Caco-2 (cell line): ENCODE measurements at regions of chr6 and their contacts with region 1.

Region 1: GRCh38 chr6:17599885-17600526 is at the start of gene FAM8A1:
- DNase-seq: peak; percentile 96
- H3K4me3 ChIP-seq: peak within 1 kb of the TSS; percentile 90
- H3K4me3 Mint-ChIP-seq: peak within 1 kb of the TSS; percentile 75
- H3K27ac Mint-ChIP-seq: peak within 1 kb of the TSS; percentile 57
- H3K4me1 ChIP-seq: peaks cover 10% of the 10 kb centered on the region
- H3K4me1 Mint-ChIP-seq: peaks cover 10% of the 10 kb centered on the region
- H3K27me3 ChIP-seq: no peaks in the 10 kb centered on the region
- H3K27me3 Mint-ChIP-seq: no peaks in the 10 kb centered on the region
- CTCF ChIP-seq: peak; percentile 30 to 67
- total RNA-seq, gene FAM8A1: 18.9 and 20.9 TPM in 2 replicates

Region 2: DNA sequence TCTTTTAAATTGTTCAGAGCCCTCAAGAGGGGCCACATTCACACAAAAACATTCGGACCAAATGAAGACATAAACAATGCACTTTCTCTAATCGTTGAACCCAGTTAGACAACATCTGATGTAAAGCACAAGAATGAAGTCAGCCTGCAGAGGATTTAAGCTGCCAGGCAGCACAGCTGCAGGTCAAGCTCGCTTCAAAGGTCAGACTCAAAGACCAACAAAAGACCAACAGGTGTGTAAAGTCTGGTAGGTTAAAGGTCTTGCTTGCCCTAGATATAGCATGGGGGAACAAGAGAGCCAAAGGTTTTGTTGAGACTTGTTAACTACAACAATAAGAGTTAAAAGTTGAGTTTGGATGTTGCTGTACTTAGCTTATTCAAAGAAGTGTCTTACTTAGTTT is 1497.8 kb before region 1 on chr6:
- CTCF ChIA-PET with region 1: no interaction called
- POLR2A ChIA-PET with region 1: interaction called, 12 read pairs
- intact Hi-C with region 1: no loop called
- DNase-seq: peak; percentile 58 to 69
- H3K4me3 ChIP-seq: no peak overlapping the region
- H3K4me3 Mint-ChIP-seq: peak overlapping the region; percentile 40
- H3K27ac Mint-ChIP-seq: no peak overlapping the region
- H3K4me1 ChIP-seq: peaks cover 61% of the 10 kb centered on the region
- H3K4me1 Mint-ChIP-seq: peaks cover 35% of the 10 kb centered on the region
- H3K27me3 ChIP-seq: no peaks in the 10 kb centered on the region
- H3K27me3 Mint-ChIP-seq: no peaks in the 10 kb centered on the region
- CTCF ChIP-seq: no peak

Region 3: DNA sequence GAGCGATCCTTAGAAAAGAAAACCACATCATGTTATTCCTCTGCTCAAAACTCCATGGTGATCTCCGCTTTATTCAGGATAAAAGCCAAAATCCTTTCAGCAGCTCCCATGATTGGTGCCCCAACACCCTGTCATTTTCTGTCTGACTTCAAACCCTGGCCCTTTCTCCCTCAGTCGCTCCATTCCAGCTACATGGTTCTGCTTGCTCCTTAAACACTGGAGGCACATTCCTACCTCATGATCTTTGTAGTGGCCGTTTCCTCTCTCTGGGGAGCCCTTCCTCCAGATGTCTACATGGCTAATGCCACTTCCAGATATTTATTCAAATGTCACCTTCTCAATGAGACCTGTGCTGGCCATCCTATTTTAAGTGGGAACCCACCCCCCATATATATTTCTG is 105.8 kb before region 1 on chr6:
- CTCF ChIA-PET with region 1: no interaction called
- POLR2A ChIA-PET with region 1: interaction called, 11 read pairs
- intact Hi-C with region 1: no loop called
- DNase-seq: no peak
- H3K4me3 ChIP-seq: no peak overlapping the region
- H3K4me3 Mint-ChIP-seq: no peak overlapping the region
- H3K27ac Mint-ChIP-seq: no peak overlapping the region
- H3K4me1 ChIP-seq: no peaks in the 10 kb centered on the region
- H3K4me1 Mint-ChIP-seq: no peaks in the 10 kb centered on the region
- H3K27me3 ChIP-seq: no peaks in the 10 kb centered on the region
- H3K27me3 Mint-ChIP-seq: no peaks in the 10 kb centered on the region
- CTCF ChIP-seq: no peak

Region 4: GRCh38 chr6:17803409-17803808 is 203.4 kb after region 1 on chr6:
- CTCF ChIA-PET with region 1: no interaction called
- POLR2A ChIA-PET with region 1: no interaction called
- intact Hi-C with region 1: loop called (anchors 5 kb)
- DNase-seq: no peak
- H3K4me3 ChIP-seq: no peak overlapping the region
- H3K4me3 Mint-ChIP-seq: no peak overlapping the region
- H3K27ac Mint-ChIP-seq: no peak overlapping the region
- H3K4me1 ChIP-seq: peaks cover 13% of the 10 kb centered on the region
- H3K4me1 Mint-ChIP-seq: peaks cover 7% of the 10 kb centered on the region
- H3K27me3 ChIP-seq: no peaks in the 10 kb centered on the region
- H3K27me3 Mint-ChIP-seq: no peaks in the 10 kb centered on the region
- CTCF ChIP-seq: no peak

Region 5: GRCh38 chr6:17820055-17820454 is 220.0 kb after region 1 on chr6:
- CTCF ChIA-PET with region 1: no interaction called
- POLR2A ChIA-PET with region 1: interaction called, 8 read pairs
- intact Hi-C with region 1: loop called (anchors 5 kb)
- DNase-seq: peak in 1 of 2 experiments; percentile 9
- H3K4me3 ChIP-seq: no peak overlapping the region
- H3K4me3 Mint-ChIP-seq: no peak overlapping the region
- H3K27ac Mint-ChIP-seq: no peak overlapping the region
- H3K4me1 ChIP-seq: peaks cover 17% of the 10 kb centered on the region
- H3K4me1 Mint-ChIP-seq: peaks cover 14% of the 10 kb centered on the region
- H3K27me3 ChIP-seq: no peaks in the 10 kb centered on the region
- H3K27me3 Mint-ChIP-seq: no peaks in the 10 kb centered on the region
- CTCF ChIP-seq: peak in 1 of 2 experiments; percentile 5

Region 6: DNA sequence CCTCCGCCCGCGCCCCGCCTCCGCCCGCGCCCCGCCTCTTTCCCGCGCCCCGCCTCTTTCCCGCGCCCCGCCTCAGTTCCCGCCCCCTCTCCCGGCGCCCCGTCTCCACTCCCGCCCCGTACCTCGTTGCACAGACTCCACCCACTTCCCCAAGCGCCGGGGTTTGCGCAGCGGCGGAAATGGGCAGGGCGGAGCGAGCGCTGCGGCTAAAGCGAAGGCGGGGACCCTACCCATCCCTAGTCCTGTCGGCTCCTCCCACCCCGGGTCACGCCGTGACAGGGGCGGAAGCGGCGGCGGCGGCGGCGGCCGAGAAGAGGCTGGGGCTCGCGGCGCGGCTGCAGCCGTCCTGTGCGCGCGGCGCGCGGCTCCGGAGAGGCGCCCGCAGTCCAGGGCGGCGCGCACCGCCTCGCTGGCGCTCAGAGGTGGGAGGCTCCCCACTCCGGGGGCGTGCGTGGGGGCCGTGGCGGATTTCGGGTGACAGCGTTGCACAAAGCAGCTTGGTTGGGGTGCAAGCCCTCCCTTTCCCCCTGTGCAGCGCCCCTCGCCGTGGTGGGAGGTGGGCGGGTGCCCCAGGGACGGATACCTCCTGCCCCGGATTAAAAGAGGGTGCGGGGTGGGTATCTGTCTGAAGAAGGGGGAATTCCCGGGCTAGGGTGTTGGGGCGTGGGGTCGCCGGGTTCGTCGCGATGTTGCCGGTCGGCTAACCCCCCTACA is 555.3 kb after region 1 on chr6 and contains the start of gene KDM1B:
- CTCF ChIA-PET with region 1: no interaction called
- POLR2A ChIA-PET with region 1: interaction called, 4 read pairs
- intact Hi-C with region 1: loop called (anchors 1 kb)
- DNase-seq: peak; percentile 98
- H3K4me3 ChIP-seq: peak within 1 kb of the TSS; percentile 98
- H3K4me3 Mint-ChIP-seq: peak within 1 kb of the TSS; percentile 99
- H3K27ac Mint-ChIP-seq: peak within 1 kb of the TSS; percentile 99
- H3K4me1 ChIP-seq: no peaks in the 10 kb centered on the region
- H3K4me1 Mint-ChIP-seq: no peaks in the 10 kb centered on the region
- H3K27me3 ChIP-seq: no peaks in the 10 kb centered on the region
- H3K27me3 Mint-ChIP-seq: no peaks in the 10 kb centered on the region
- CTCF ChIP-seq: no peak
- total RNA-seq, gene KDM1B: 9.5 and 10.6 TPM in 2 replicates